ENCODE measurements at regions of chr6 and their contacts with region 1.

Region 1: DNA sequence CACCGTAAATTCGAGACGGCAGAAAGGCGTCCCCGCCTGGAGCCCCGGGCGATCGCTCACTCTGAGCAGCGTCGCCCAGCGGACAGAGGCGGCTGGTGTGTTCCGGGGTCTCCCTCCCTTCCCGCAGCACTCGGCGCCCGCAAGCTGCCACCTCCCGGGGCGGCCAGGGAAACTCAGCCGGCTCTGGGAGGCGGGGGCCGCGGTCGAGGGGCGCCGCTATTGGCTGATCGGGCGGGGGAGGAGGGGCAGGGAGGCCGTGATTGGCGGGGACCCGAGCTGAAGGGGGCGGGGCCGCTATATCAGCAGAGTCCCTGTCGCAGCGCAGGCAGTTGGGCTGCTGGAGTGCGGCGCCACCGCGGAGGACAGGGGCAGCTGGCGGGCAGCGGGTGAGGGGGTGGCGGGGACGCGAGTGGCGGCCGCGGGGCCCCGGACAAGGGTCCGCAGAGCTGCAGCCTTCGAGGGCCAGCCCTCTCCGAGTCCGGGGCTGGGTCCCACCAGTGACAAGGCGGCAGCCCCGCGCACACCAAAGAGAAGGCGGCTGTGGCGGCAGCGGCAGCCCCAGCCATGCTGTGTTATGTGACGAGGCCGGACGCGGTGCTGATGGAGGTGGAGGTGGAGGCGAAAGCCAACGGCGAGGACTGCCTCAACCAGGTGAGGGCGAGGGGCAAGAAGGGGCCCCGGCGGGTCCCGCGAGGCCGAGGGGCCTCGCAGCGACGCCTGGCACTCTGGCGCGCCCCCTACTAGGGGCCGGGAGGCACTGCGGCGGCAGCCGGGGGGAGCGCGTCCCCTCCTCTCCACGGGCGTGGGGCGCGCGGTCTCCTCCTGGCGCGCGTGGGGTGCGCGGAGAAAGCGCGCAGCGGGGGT is at the start of gene MYLIP:
- DNase-seq: peak; percentile 74
- ATAC-seq: peak; percentile 87
- H3K4me3 ChIP-seq: peak within 1 kb of the TSS; percentile 86
- H3K27ac ChIP-seq: peak within 1 kb of the TSS; percentile 53
- H3K4me1 ChIP-seq: peaks cover 6% of the 10 kb centered on the region
- H3K27me3 ChIP-seq: no peaks in the 10 kb centered on the region
- CTCF ChIP-seq: peak; percentile 73 to 91 (median 79)
- EP300 ChIP-seq: peak in 1 of 2 experiments; percentile 12; a peak in 1 of 4 replicates
- POLR2A ChIP-seq: peak; percentile 100
- RAD21 ChIP-seq: peak; percentile 77
- polyA plus RNA-seq, gene MYLIP: 5.3 to 5.8 TPM

Region 2: GRCh38 chr6:15682965-15683822 is 445.8 kb before region 1 on chr6:
- CTCF ChIA-PET with region 1: interaction called, 6 read pairs
- POLR2A ChIA-PET with region 1: interaction called, 4 read pairs
- RAD21 ChIA-PET with region 1: interaction called, 13 read pairs
- SMC1A ChIA-PET with region 1: interaction called, 10 read pairs
- in situ Hi-C with region 1: no loop called
- intact Hi-C with region 1: no loop called
- DNase-seq: peak; percentile 40
- ATAC-seq: peak; percentile 93
- H3K4me3 ChIP-seq: no peak overlapping the region
- H3K27ac ChIP-seq: no peak overlapping the region
- H3K4me1 ChIP-seq: 0 out of 2 replicates have a peak, but pooled peaks cover 3% of the 10 kb centered on the region
- H3K27me3 ChIP-seq: 0 out of 4 replicates have a peak, but pooled peaks cover 0 to 3% of the 10 kb centered on the region in 2 experiments
- CTCF ChIP-seq: no peak
- EP300 ChIP-seq: peak; percentile 57 to 68; a peak in 3 of 4 replicates
- POLR2A ChIP-seq: no peak
- RAD21 ChIP-seq: no peak

Region 3: GRCh38 chr6:15770347-15771143 is 358.4 kb before region 1 on chr6:
- CTCF ChIA-PET with region 1: interaction called, 17 read pairs
- POLR2A ChIA-PET with region 1: interaction called, 5 read pairs
- RAD21 ChIA-PET with region 1: interaction called, 18 read pairs
- SMC1A ChIA-PET with region 1: interaction called, 7 read pairs
- in situ Hi-C with region 1: no loop called
- intact Hi-C with region 1: no loop called
- DNase-seq: peak; percentile 62
- ATAC-seq: peak; percentile 88
- H3K4me3 ChIP-seq: no peak overlapping the region
- H3K27ac ChIP-seq: peak overlapping the region; percentile 38
- H3K4me1 ChIP-seq: peaks cover 7% of the 10 kb centered on the region
- H3K27me3 ChIP-seq: no peaks in the 10 kb centered on the region
- CTCF ChIP-seq: peak; percentile 24 to 32 (median 30); a peak in 5 of 6 replicates
- EP300 ChIP-seq: peak; percentile 32 to 76; a peak in 2 of 4 replicates
- POLR2A ChIP-seq: no peak
- RAD21 ChIP-seq: peak; percentile 44

Region 4: GRCh38 chr6:15879382-15880261 is 249.4 kb before region 1 on chr6:
- CTCF ChIA-PET with region 1: interaction called, 18 read pairs
- POLR2A ChIA-PET with region 1: interaction called, 3 read pairs
- RAD21 ChIA-PET with region 1: interaction called, 14 read pairs
- SMC1A ChIA-PET with region 1: interaction called, 16 read pairs
- in situ Hi-C with region 1: no loop called
- intact Hi-C with region 1: no loop called
- DNase-seq: no peak
- ATAC-seq: peak; percentile 81
- H3K4me3 ChIP-seq: no peak overlapping the region
- H3K27ac ChIP-seq: peak overlapping the region; percentile 61
- H3K4me1 ChIP-seq: peaks cover 18% of the 10 kb centered on the region
- H3K27me3 ChIP-seq: no peaks in the 10 kb centered on the region
- CTCF ChIP-seq: no peak
- EP300 ChIP-seq: 0 out of 4 replicates have a peak, but pooled peaks of 1 of the 2 experiments have one; percentile 25
- POLR2A ChIP-seq: no peak
- RAD21 ChIP-seq: no peak

Region 5: DNA sequence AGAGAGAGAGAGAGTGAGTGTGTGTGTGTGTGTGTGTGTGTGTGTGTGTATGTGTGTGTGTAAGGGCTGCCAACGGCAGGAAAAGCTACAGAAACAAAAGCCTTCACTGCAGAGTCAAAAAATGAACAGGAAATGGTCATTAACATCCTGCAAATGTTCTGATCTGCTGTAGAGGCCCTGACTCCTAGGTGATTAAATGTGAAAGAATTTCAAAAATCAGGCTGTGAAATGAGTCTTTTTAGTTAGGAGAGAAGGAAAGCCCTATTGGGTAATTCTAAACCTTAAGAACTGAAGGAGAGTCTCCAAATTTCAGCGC is 166.6 kb before region 1 on chr6:
- CTCF ChIA-PET with region 1: interaction called, 3 read pairs
- POLR2A ChIA-PET with region 1: interaction called, 3 read pairs
- RAD21 ChIA-PET with region 1: interaction called, 10 read pairs
- SMC1A ChIA-PET with region 1: interaction called, 4 read pairs
- in situ Hi-C with region 1: no loop called
- intact Hi-C with region 1: no loop called
- DNase-seq: no peak
- ATAC-seq: peak; percentile 78
- H3K4me3 ChIP-seq: no peak overlapping the region
- H3K27ac ChIP-seq: peak overlapping the region; percentile 45
- H3K4me1 ChIP-seq: peaks cover 26% of the 10 kb centered on the region; the same call in 1 of the 2 replicates
- H3K27me3 ChIP-seq: no peaks in the 10 kb centered on the region
- CTCF ChIP-seq: no peak
- EP300 ChIP-seq: peak; percentile 12 to 48; a peak in 2 of 4 replicates
- POLR2A ChIP-seq: no peak
- RAD21 ChIP-seq: no peak

Region 6: GRCh38 chr6:16097382-16098171 is 31.4 kb before region 1 on chr6:
- CTCF ChIA-PET with region 1: interaction called, 5 read pairs
- POLR2A ChIA-PET with region 1: interaction called, 5 read pairs
- RAD21 ChIA-PET with region 1: interaction called, 11 read pairs
- SMC1A ChIA-PET with region 1: interaction called, 7 read pairs
- in situ Hi-C with region 1: no loop called
- intact Hi-C with region 1: loop called (anchors 2 kb)
- DNase-seq: peak; percentile 32
- ATAC-seq: peak; percentile 92
- H3K4me3 ChIP-seq: no peak overlapping the region
- H3K27ac ChIP-seq: no peak overlapping the region
- H3K4me1 ChIP-seq: peaks cover 4% of the 10 kb centered on the region; the same call in 1 of the 2 replicates
- H3K27me3 ChIP-seq: no peaks in the 10 kb centered on the region
- CTCF ChIP-seq: no peak
- EP300 ChIP-seq: no peak
- POLR2A ChIP-seq: no peak
- RAD21 ChIP-seq: no peak

Region 7: GRCh38 chr6:16183187-16183664 is 54.2 kb after region 1 on chr6:
- CTCF ChIA-PET with region 1: interaction called, 86 read pairs
- POLR2A ChIA-PET with region 1: interaction called, 6 read pairs
- RAD21 ChIA-PET with region 1: interaction called, 42 read pairs
- SMC1A ChIA-PET with region 1: interaction called, 93 read pairs
- in situ Hi-C with region 1: no loop called
- intact Hi-C with region 1: loop called (anchors 2 kb)
- DNase-seq: peak; percentile 35
- ATAC-seq: peak; percentile 65
- H3K4me3 ChIP-seq: no peak overlapping the region
- H3K27ac ChIP-seq: no peak overlapping the region
- H3K4me1 ChIP-seq: no peaks in the 10 kb centered on the region
- H3K27me3 ChIP-seq: no peaks in the 10 kb centered on the region; a peak in 1 of 4 replicates
- CTCF ChIP-seq: peak; percentile 61 to 79 (median 63)
- EP300 ChIP-seq: no peak
- POLR2A ChIP-seq: no peak
- RAD21 ChIP-seq: peak; percentile 78

Measured in GM12878 (cell line).